Gastrocnemius medialis (tissue), 4 donors: ENCODE measurements at regions of chr17 and their contacts with region 1.

Region 1: GRCh38 chr17:7444682-7445618 is at the start of gene CHRNB1:
- DNase-seq: peak; percentile 78 to 91
- ATAC-seq: peak; percentile 78 to 81
- H3K4me3 ChIP-seq: peak within 1 kb of the TSS; percentile 69 to 87 (median 77)
- H3K27ac ChIP-seq: peak within 1 kb of the TSS; percentile 94 to 100 (median 98)
- H3K4me1 ChIP-seq: peaks cover 22 to 42% of the 10 kb centered on the region in 2 donors
- H3K27me3 ChIP-seq: no peaks in the 10 kb centered on the region
- CTCF ChIP-seq: peak in 3 of 5 experiments; percentile 18 to 34 (median 34)
- POLR2A ChIP-seq: peak; percentile 75 to 87
- total RNA-seq, gene CHRNB1: 82.3 to 202 (median 101) TPM

Region 2: DNA sequence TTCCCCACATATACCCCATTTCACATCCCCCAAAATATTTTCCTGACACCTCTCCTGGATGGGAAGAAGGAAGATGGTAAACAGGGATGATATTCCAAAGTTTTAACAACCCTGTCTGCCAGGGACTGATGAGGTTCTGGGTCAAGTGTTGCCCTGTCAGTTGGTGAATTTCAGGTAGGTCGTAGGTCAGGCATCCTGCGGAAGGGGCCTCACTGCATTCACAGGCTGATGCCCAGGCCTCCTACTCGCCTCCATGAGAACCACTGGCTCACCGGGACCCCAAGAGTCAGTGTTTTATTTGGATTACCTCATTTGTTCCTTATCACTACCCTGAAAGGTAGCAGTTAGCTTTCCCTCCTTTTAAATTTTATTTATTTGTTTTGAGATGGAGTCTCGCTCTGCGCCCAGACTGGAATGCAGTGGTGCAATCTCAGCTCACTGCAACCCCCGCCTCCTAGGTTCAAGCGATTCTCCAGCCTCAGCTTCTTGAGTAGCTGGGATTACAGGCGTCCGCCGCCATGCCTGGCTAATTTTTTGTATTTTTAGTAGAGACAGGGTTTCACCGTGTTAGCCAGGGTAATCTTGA is 23.9 kb after region 1 on chr17:
- in situ Hi-C with region 1: no loop called
- intact Hi-C with region 1: loop called (anchors 2 kb)
- DNase-seq: no peak
- ATAC-seq: no peak
- H3K4me3 ChIP-seq: no peak overlapping the region
- H3K27ac ChIP-seq: peak overlapping the region; percentile 12 to 100 (median 86)
- H3K4me1 ChIP-seq: peaks cover 46 to 55% of the 10 kb centered on the region in 2 donors
- H3K27me3 ChIP-seq: no peaks in the 10 kb centered on the region
- CTCF ChIP-seq: no peak
- POLR2A ChIP-seq: no peak

Region 3: GRCh38 chr17:7477392-7478275 is 32.7 kb after region 1 on chr17:
- in situ Hi-C with region 1: loop called in 1 of 4 experiments (anchors 5 kb)
- intact Hi-C with region 1: loop called (anchors 2 kb)
- DNase-seq: peak; percentile 22 to 44
- ATAC-seq: no peak
- H3K4me3 ChIP-seq: peak overlapping the region; percentile 80 to 99 (median 92)
- H3K27ac ChIP-seq: peak overlapping the region; percentile 97 to 100 (median 100)
- H3K4me1 ChIP-seq: peaks cover 59 to 79% of the 10 kb centered on the region in 2 donors
- H3K27me3 ChIP-seq: no peaks in the 10 kb centered on the region
- CTCF ChIP-seq: no peak
- POLR2A ChIP-seq: peak; percentile 32 to 42

Region 4: DNA sequence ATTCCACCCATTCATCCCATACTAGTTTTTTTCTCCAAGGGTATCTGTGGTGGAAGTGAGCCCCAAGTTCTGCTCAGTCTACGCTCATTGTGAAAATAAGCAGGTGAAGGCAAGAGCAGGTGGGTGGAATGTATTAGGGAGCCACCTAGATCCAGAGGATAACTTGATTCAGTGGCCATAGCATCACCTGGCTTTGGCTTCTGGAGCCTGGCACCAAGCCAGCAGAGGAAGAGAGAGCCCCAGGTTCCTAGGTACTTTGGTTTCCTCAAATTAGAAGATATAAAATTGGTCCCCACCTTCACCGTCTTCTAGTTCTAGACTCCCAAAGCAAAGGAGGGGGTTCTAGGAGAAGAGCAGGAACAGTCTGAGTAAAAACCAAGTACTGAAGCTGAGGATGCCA is 165.7 kb after region 1 on chr17:
- in situ Hi-C with region 1: no loop called
- intact Hi-C with region 1: no loop called
- DNase-seq: no peak
- ATAC-seq: no peak
- H3K4me3 ChIP-seq: no peak overlapping the region
- H3K27ac ChIP-seq: peak overlapping the region; percentile 88 to 98 (median 91)
- H3K4me1 ChIP-seq: peaks cover 63 to 65% of the 10 kb centered on the region in 2 donors
- H3K27me3 ChIP-seq: no peaks in the 10 kb centered on the region
- CTCF ChIP-seq: no peak
- POLR2A ChIP-seq: no peak